Activated CD8-positive, alpha-beta memory T cell treated with anti-CD3 and anti-CD28 coated beads, Interleukin-2, amount 10 ng/mL, durations not matched to agents 7 days and 5 days (primary cell): ENCODE measurements at regions of chr14 and their contacts with region 1.

Region 1: GRCh38 chr14:68788996-68789820 is 3.7 kb downstream of the ZFP36L1 start:
- DNase-seq: peak; percentile 94
- ATAC-seq: peak; percentile 52
- H3K4me3 Mint-ChIP-seq: peak overlapping the region; percentile 87
- H3K27ac Mint-ChIP-seq: peak overlapping the region; percentile 100
- H3K4me1 Mint-ChIP-seq: peaks cover 58% of the 10 kb centered on the region
- H3K27me3 Mint-ChIP-seq: no peaks in the 10 kb centered on the region

Region 2: GRCh38 chr14:68248481-68249255 is 540.5 kb before region 1 on chr14:
- CTCF ChIA-PET with region 1: interaction called, 72 read pairs
- DNase-seq: no peak
- ATAC-seq: peak; percentile 36
- H3K4me3 Mint-ChIP-seq: no peak overlapping the region
- H3K27ac Mint-ChIP-seq: no peak overlapping the region
- H3K4me1 Mint-ChIP-seq: peaks cover 4% of the 10 kb centered on the region
- H3K27me3 Mint-ChIP-seq: no peaks in the 10 kb centered on the region

Region 3: DNA sequence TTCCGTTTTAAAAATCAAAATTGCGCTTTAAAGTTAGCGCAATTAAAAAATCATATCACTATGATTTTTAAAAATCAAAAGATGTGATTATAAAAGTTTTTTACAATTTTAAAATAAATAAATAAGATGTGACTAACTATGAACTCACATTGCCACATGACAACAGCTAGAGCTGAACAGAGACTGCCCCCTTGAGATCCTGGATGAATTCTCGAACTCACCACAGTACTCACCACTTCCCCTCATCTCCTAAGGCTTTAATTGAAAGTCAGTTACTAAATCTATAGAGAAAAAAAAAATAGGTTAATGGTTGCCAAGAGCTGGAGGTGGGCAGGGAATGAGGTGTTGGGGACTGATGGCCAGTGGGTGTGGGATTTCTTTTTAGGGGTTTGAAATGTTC is 380.5 kb before region 1 on chr14:
- CTCF ChIA-PET with region 1: interaction called, 13 read pairs
- DNase-seq: no peak
- ATAC-seq: no peak
- H3K4me3 Mint-ChIP-seq: no peak overlapping the region
- H3K27ac Mint-ChIP-seq: no peak overlapping the region
- H3K4me1 Mint-ChIP-seq: peaks cover 21% of the 10 kb centered on the region
- H3K27me3 Mint-ChIP-seq: no peaks in the 10 kb centered on the region

Region 4: DNA sequence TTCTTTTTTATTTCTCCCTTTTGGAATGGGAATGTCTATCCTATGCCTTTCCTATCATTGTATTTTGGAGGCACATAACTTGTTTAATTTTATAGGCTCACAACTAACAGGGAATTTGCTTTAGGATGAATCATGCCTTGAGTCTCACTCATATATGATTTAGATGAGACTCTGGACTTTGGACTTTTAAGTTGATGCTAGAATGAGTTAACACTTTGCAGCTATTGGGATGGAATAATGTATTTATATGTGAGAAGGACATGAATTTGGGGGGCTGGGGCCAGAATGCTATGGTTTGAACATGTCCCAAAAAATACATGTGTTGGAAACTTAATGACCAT is 361.7 kb before region 1 on chr14:
- CTCF ChIA-PET with region 1: no interaction called
- DNase-seq: no peak
- ATAC-seq: no peak
- H3K4me3 Mint-ChIP-seq: no peak overlapping the region
- H3K27ac Mint-ChIP-seq: no peak overlapping the region
- H3K4me1 Mint-ChIP-seq: no peaks in the 10 kb centered on the region
- H3K27me3 Mint-ChIP-seq: no peaks in the 10 kb centered on the region

Region 5: DNA sequence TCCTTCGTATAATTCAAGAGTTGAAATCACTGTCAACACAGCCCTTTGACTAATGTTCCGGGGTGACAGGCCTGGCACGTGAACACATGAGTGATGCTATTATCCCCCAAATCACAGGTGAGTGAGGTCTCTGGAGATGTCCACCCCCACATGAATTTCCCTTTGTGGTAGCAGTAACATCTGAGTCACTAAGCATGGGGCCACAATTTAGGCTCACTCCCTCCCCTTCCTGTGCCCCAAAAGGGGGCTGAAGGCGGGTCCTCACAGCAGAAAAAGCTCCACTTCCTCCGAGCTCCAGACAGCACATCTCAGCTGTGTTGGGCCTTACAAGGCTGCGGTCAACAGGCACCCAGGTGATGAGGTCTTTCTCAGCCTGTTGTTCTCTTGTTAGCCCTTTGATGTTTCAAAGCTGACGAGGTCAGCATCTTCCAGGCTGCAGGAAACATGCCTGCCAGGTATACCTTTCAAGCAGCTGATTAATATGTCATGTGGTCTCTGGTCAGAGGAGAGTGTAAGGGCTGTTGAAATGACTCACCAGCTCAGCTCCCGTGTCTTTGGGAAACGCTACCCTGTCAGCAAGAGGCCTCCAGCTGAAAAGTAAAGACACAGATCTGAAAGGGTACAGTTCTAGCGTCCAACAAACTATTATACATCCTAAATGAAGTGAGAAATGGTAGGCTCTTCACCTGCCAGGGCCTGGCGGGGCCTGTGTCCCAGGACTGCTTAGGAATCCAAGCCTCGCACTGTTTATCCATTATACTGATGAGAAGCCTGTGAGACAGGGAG is 103.6 kb before region 1 on chr14:
- CTCF ChIA-PET with region 1: interaction called, 10 read pairs
- DNase-seq: peak; percentile 87
- ATAC-seq: peak; percentile 86
- H3K4me3 Mint-ChIP-seq: peak overlapping the region; percentile 25
- H3K27ac Mint-ChIP-seq: peak overlapping the region; percentile 84
- H3K4me1 Mint-ChIP-seq: peaks cover 48% of the 10 kb centered on the region
- H3K27me3 Mint-ChIP-seq: no peaks in the 10 kb centered on the region

Region 6: DNA sequence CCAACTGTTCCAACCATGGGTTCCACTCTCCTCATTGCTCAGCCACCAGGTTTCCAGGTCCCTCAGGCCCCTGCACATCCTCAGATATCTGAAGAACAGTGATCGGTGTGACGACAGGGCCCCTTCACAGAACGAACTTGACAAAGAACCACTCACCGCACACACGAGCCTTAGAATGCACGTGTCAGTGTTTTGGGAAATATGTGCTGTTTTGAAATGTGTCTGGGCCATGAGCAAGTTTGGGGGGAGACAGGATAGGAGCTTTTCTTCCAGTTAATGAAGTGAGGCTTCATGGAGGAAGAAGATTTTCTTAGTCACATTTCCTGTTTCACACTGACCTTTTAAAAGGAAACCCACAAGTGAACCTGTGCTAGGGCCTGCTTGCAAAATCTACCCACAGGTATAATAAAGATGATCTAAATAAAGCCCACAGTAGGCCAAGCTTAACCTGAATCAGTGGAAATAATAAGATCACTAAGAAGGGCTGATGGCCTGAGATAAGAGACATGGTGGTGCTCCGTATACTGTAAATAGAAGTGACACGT is 54.9 kb before region 1 on chr14:
- CTCF ChIA-PET with region 1: interaction called, 10 read pairs
- DNase-seq: peak; percentile 69
- ATAC-seq: peak; percentile 81
- H3K4me3 Mint-ChIP-seq: no peak overlapping the region
- H3K27ac Mint-ChIP-seq: peak overlapping the region; percentile 81
- H3K4me1 Mint-ChIP-seq: peaks cover 31% of the 10 kb centered on the region
- H3K27me3 Mint-ChIP-seq: no peaks in the 10 kb centered on the region